Heart left ventricle (tissue), 16 donors: ENCODE measurements at regions of chr15 and their contacts with region 1.

Region 1: DNA sequence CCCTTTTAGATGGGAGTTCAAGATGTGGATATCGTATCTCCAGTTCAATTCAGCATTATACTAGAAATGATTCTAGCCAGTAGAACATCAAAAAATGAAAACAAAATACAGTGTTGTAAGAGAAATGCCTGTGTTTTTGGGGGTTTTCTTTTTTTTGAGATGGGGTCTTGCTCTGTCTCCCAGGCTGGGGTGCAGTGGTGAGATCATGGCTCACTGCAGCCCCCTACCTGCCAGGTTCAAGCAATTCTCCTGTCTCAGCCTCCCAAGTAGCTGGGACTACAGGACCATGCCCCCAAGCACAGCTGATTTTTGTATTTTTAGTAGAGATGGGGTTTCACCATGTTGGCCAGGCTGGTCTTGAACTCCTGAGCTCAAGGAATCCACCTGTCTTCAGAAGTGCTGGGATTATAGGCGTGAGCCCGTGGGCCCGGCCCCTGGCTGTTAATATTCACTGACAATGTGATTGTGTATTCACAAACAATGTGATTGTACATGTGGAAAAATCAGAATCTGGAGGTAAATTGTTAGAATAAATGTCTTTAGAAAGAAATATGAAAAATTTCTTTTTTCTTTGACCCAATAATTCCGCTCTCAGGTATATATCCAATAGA is 59.0 kb downstream of the ARIH1 start:
- DNase-seq: no peak
- ATAC-seq: no peak
- H3K4me3 ChIP-seq: no peak overlapping the region
- H3K27ac ChIP-seq: no peak overlapping the region
- H3K4me1 ChIP-seq: peaks cover 0 to 12% (median 0%) of the 10 kb centered on the region in 12 donors
- H3K27me3 ChIP-seq: no peaks in the 10 kb centered on the region
- CTCF ChIP-seq: peak; percentile 12 to 52 (median 30)
- POLR2A ChIP-seq: no peak

Region 2: DNA sequence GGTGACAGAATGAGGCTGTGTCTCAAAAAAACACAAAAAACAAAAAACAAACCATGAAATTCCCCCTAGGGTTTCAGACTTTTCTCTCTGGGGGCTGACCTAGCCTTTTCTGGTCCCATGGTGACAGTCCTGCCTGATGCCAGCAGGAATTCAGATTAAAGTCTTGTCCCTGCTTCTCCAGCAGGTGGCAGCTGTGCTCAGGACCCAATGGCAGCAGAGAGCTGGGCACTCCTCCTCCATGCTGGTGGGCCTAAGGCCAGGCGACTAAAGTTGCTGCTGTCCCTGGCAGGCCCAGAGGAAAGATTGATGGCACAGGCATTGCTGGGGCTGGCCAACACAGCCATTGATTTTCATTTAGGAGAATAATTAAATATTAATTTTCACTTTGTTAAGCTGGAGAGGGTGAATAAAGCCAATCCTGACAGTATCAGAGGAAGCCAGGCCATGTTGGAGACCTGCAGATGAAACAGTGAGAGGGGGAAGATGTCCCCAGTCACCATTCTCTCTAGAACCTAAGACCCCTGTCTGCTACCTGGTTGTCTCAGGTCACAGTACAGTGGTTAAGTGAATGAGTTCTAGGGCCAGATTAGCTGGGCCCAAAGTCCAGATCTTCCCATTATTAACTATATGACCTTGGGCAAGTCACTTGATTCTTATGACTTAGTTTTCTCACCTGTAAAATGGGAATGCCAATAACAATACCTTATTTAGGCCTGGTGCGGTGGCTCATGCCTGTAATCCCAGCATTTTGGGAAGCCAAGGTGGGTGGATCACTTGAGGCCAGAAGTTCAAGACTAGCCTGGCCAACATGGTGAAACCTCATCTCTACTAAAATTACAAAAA is 220.3 kb before region 1 on chr15:
- intact Hi-C with region 1: loop called in 1 of 10 experiments (anchors 10 kb)
- DNase-seq: peak; percentile 54 to 76 (median 66)
- ATAC-seq: peak; percentile 63 to 92 (median 92)
- H3K4me3 ChIP-seq: no peak overlapping the region
- H3K27ac ChIP-seq: no peak overlapping the region
- H3K4me1 ChIP-seq: no peaks in the 10 kb centered on the region
- H3K27me3 ChIP-seq: no peaks in the 10 kb centered on the region
- CTCF ChIP-seq: peak; percentile 52 to 75 (median 67)
- POLR2A ChIP-seq: no peak

Region 3: DNA sequence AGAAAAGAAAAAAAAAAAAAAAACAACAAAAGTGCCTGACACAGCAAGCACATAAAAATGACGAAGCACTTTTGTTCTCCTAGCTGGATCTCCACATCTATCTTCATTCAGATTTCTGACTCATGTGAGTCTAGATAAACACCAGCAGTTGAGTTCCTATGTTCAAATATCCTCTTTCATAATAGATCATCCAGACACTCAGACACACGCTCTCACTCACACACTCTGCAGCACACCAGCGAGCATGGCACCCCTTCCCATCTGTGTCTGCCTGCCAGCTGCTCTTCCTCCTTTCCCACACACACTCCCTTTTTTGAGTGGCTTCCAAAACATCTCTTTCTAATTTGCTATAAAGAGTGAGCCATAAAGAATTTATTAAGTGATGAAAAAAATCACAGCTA is 193.3 kb before region 1 on chr15:
- intact Hi-C with region 1: loop called in 1 of 10 experiments (anchors 10 kb)
- DNase-seq: no peak
- ATAC-seq: peak in 2 of 4 donors; percentile 55 to 56
- H3K4me3 ChIP-seq: no peak overlapping the region
- H3K27ac ChIP-seq: peak overlapping the region in 2 of 12 donors; percentile 53 to 69
- H3K4me1 ChIP-seq: peaks cover 0 to 21% (median 0%) of the 10 kb centered on the region in 12 donors
- H3K27me3 ChIP-seq: no peaks in the 10 kb centered on the region
- CTCF ChIP-seq: no peak
- POLR2A ChIP-seq: no peak

Region 4: GRCh38 chr15:72616491-72617210 is 83.6 kb after region 1 on chr15:
- intact Hi-C with region 1: no loop called
- DNase-seq: no peak
- ATAC-seq: no peak
- H3K4me3 ChIP-seq: no peak overlapping the region
- H3K27ac ChIP-seq: no peak overlapping the region
- H3K4me1 ChIP-seq: peaks cover 0 to 7% (median 0%) of the 10 kb centered on the region in 12 donors
- H3K27me3 ChIP-seq: no peaks in the 10 kb centered on the region
- CTCF ChIP-seq: no peak
- POLR2A ChIP-seq: no peak